ENCODE measurements at regions of chr3 and their contacts with region 1.

Region 1: DNA sequence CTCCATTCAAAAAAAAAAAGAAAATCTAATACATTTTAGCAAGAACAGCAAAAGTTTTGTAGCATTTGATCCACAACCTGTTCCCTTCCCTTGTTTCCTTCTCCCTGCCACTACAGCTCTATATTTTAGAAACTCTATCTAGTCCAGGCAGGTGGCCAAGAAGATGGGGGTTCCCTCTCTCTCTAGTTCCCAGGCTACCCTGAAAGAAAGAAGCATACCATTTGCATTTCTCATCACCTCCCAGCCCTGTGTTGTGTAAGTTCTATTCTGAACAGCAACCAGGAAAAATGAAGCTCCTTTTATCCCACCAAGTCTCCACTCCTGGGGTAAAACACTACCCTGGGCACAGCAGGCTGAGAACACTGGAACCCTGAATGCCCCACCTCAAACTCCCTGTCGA is 100.0 kb downstream of the PCCB start:
- DNase-seq: no peak
- ATAC-seq: no peak
- H3K4me3 Mint-ChIP-seq: no peak overlapping the region
- H3K27ac Mint-ChIP-seq: no peak overlapping the region
- H3K4me1 Mint-ChIP-seq: peaks cover 15% of the 10 kb centered on the region
- H3K27me3 Mint-ChIP-seq: no peaks in the 10 kb centered on the region

Region 2: GRCh38 chr3:136330900-136331299 is 19.2 kb before region 1 on chr3:
- CTCF ChIA-PET with region 1: no interaction called
- POLR2A ChIA-PET with region 1: no interaction called
- intact Hi-C with region 1: no loop called
- DNase-seq: no peak
- ATAC-seq: no peak
- H3K4me3 Mint-ChIP-seq: no peak overlapping the region
- H3K27ac Mint-ChIP-seq: no peak overlapping the region
- H3K4me1 Mint-ChIP-seq: no peaks in the 10 kb centered on the region
- H3K27me3 Mint-ChIP-seq: no peaks in the 10 kb centered on the region

Region 3: DNA sequence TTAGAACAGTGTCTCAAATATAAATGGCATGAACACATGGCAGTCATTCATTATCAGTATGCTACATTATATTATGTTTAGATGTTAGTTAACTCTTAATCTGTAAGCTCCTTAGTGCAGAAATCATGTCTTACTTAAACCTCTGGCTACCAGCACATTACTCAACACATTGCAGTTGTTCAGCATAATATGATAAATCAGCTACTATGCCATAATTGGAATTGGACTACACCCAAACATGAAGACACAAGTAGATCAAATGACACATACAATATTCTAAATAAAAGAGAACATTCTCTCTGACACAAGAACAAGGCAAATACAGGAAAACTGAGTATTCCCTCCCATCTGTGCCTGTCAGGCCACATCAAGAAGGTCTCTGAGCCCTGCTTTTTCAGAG is 16.2 kb after region 1 on chr3:
- CTCF ChIA-PET with region 1: interaction called, 16 read pairs
- POLR2A ChIA-PET with region 1: no interaction called
- intact Hi-C with region 1: no loop called
- DNase-seq: no peak
- ATAC-seq: no peak
- H3K4me3 Mint-ChIP-seq: no peak overlapping the region
- H3K27ac Mint-ChIP-seq: no peak overlapping the region
- H3K4me1 Mint-ChIP-seq: no peaks in the 10 kb centered on the region
- H3K27me3 Mint-ChIP-seq: no peaks in the 10 kb centered on the region